Prostate gland (tissue), 2 donors: ENCODE measurements at regions of chr22 and their contacts with region 1.

Region 1: GRCh38 chr22:46845296-46846149 is 83.1 kb downstream of the TBC1D22A start:
- DNase-seq: no peak
- H3K4me3 ChIP-seq: no peak overlapping the region
- H3K27ac ChIP-seq: no peak overlapping the region
- H3K4me1 ChIP-seq: no peaks in the 10 kb centered on the region
- H3K27me3 ChIP-seq: no peaks in the 10 kb centered on the region
- CTCF ChIP-seq: peak in 3 of 4 experiments; percentile 21 to 56 (median 56)
- POLR2A ChIP-seq: no peak

Region 2: GRCh38 chr22:46649141-46650077 is 196.1 kb before region 1 on chr22:
- intact Hi-C with region 1: no loop called
- DNase-seq: peak; percentile 81
- H3K4me3 ChIP-seq: no peak overlapping the region
- H3K27ac ChIP-seq: peak overlapping the region; percentile 69 to 71
- H3K4me1 ChIP-seq: peaks cover 11% of the 10 kb centered on the region
- H3K27me3 ChIP-seq: no peaks in the 10 kb centered on the region
- CTCF ChIP-seq: no peak
- POLR2A ChIP-seq: no peak

Region 3: GRCh38 chr22:46941968-46942798 is 96.7 kb after region 1 on chr22:
- intact Hi-C with region 1: no loop called
- DNase-seq: no peak
- H3K4me3 ChIP-seq: no peak overlapping the region
- H3K27ac ChIP-seq: no peak overlapping the region
- H3K4me1 ChIP-seq: no peaks in the 10 kb centered on the region
- H3K27me3 ChIP-seq: no peaks in the 10 kb centered on the region
- CTCF ChIP-seq: no peak
- POLR2A ChIP-seq: no peak

Region 4: GRCh38 chr22:47575291-47575690 is 729.8 kb after region 1 on chr22:
- intact Hi-C with region 1: loop called (anchors 10 kb)
- DNase-seq: peak; percentile 58
- H3K4me3 ChIP-seq: no peak overlapping the region
- H3K27ac ChIP-seq: no peak overlapping the region
- H3K4me1 ChIP-seq: no peaks in the 10 kb centered on the region
- H3K27me3 ChIP-seq: no peaks in the 10 kb centered on the region
- CTCF ChIP-seq: peak in 1 of 4 experiments; percentile 6
- POLR2A ChIP-seq: no peak

Region 5: GRCh38 chr22:48492366-48493320 is 1647.1 kb after region 1 on chr22:
- intact Hi-C with region 1: loop called (anchors 2 kb)
- DNase-seq: peak; percentile 63
- H3K4me3 ChIP-seq: no peak overlapping the region
- H3K27ac ChIP-seq: no peak overlapping the region
- H3K4me1 ChIP-seq: peaks cover 10% of the 10 kb centered on the region
- H3K27me3 ChIP-seq: peaks cover 16% of the 10 kb centered on the region
- CTCF ChIP-seq: peak; percentile 38 to 81 (median 69)
- POLR2A ChIP-seq: no peak